Activated naive CD4-positive, alpha-beta T cell treated with anti-CD3 and anti-CD28 coated beads for 36 hours (primary cell): ENCODE measurements at regions of chr1 and their contacts with region 1.

Region 1: DNA sequence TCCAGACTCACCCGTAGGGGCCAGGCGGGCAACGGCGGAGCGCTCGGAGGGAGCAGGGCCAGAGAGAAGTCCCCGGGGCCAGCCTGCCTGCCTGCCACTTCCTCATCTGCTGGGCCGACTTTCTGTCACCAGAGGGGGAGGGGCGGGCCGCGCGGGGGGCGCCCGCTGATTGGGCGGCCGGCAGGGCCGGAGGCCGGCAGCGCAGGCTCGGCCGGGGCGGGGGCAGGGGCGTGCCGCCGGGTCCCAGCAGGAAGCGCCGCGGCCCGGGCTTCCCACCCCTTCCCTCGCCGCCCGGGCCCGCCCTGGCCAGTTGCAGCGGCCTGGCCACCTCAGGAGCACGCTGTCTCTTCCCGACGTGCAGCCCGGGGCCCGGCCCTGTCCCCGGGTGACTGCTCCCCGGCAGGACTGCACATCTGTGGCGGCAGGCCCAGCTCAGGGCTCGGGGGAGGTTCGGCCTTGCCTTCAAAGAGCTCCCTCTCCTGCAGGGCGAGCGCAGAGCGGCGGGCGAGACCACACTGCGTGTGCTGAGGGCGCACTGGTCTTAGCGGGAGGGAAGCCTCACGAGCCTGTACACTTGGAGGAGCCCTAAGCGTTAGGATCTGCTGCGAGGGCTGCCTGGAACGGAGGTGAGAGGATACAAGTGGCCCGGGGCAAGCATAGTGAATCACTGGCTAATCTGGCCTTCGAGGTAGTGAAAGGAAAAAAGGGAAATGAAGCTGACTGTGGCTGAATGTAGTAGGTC is at the start of gene ELOVL1:
- DNase-seq: peak; percentile 91
- H3K4me3 Mint-ChIP-seq: peak within 1 kb of the TSS; percentile 88
- H3K27ac Mint-ChIP-seq: peak within 1 kb of the TSS; percentile 87
- H3K4me1 Mint-ChIP-seq: peaks cover 35% of the 10 kb centered on the region
- H3K27me3 Mint-ChIP-seq: no peaks in the 10 kb centered on the region
- total RNA-seq, gene ELOVL1: 42.8 to 44.2 TPM

Region 2: DNA sequence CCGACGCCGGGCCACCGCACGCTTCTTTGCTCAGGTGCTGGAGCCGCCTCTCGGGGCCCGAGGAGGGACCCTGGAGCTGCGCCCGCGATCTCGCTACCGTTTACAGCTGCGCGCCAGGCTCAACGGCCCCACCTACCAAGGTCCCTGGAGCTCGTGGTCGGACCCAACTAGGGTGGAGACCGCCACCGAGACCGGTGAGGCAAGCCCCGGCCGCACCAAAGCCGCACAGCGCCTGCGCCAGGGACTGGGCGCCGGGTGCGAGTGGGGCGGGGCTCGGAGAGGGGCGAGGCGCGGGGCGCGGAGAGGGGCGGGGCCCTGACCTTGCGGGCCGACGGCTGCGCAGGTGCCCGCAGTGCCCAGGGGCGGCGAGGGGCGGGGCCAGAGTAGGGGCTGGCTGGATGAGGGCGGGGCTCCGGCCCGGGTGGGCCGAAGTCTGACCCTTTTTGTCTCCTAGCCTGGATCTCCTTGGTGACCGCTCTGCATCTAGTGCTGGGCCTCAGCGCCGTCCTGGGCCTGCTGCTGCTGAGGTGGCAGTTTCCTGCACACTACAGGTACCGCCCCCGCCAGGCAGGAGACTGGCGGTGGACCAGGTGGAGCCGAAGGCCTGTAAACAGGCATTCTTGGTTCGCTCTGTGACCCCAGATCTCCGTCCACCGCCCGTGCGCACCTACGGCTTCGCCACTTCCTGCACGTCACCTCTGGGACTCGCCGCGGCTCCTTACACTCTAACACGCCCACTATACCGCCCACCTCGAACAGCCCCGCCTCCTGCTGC is 19.1 kb before region 1 on chr1:
- CTCF ChIA-PET with region 1: no interaction called
- intact Hi-C with region 1: no loop called
- DNase-seq: peak; percentile 79
- H3K4me3 Mint-ChIP-seq: peak overlapping the region; percentile 74
- H3K27ac Mint-ChIP-seq: peak overlapping the region; percentile 77
- H3K4me1 Mint-ChIP-seq: peaks cover 6% of the 10 kb centered on the region
- H3K27me3 Mint-ChIP-seq: no peaks in the 10 kb centered on the region

Region 3: DNA sequence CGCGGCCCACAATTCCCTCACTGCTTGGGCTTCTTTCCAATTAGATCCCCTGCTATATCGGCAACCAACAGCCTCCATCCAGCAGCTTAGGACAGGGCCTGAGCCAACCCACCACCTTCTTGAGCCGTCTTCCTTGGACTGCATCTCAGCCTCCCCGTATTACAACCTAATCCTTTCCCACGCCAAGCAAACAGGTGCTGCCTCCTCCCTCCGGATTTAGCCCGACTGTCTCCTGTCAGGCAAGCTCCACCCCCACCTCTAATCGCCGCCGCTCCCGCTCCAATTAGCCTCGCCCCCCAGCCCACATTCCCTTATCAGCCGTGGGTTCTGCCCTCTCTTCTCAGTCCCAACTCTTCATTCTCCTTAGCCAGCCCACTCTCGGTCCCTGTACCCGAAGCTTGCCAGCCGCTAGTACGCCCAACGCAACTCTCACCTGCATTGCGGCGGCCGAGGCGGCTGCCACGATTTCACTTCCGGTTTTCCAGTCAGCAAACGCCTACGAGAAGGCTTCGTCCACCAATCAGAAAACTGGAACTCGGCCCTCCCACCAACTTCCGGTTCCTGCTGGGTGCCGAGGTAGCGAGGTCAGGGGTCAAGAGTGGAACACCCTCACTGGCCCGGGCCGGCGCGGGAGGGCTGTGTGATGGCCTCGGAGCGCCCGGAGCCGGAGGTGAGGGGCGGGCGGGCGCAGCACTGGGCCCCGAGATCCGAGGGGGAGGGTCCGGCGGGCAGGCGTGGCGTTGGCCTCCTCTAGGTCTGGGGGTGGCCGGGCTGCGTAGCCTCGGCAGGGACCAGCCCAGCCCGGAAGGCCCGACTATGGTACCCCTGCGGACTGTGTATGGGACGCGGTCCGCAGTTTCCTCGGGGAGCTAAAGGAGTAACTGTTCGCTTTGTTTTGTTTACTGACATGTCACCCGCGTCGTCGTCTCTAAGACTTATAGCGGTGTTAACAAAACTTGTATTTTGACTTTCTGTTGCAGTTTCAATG is 21.5 kb after region 1 on chr1 and contains the starts of genes MED8 and SZT2:
- CTCF ChIA-PET with region 1: interaction called, 4 read pairs
- intact Hi-C with region 1: loop called (anchors 1 kb)
- DNase-seq: peak; percentile 96
- H3K4me3 Mint-ChIP-seq: peak within 1 kb of the TSS; percentile 95
- H3K27ac Mint-ChIP-seq: peak within 1 kb of the TSS; percentile 94
- H3K4me1 Mint-ChIP-seq: peaks cover 40% of the 10 kb centered on the region
- H3K27me3 Mint-ChIP-seq: no peaks in the 10 kb centered on the region
- total RNA-seq, gene MED8: 45.8 to 45.9 TPM
- total RNA-seq, gene SZT2: 26.6 to 28.2 TPM

Region 4: DNA sequence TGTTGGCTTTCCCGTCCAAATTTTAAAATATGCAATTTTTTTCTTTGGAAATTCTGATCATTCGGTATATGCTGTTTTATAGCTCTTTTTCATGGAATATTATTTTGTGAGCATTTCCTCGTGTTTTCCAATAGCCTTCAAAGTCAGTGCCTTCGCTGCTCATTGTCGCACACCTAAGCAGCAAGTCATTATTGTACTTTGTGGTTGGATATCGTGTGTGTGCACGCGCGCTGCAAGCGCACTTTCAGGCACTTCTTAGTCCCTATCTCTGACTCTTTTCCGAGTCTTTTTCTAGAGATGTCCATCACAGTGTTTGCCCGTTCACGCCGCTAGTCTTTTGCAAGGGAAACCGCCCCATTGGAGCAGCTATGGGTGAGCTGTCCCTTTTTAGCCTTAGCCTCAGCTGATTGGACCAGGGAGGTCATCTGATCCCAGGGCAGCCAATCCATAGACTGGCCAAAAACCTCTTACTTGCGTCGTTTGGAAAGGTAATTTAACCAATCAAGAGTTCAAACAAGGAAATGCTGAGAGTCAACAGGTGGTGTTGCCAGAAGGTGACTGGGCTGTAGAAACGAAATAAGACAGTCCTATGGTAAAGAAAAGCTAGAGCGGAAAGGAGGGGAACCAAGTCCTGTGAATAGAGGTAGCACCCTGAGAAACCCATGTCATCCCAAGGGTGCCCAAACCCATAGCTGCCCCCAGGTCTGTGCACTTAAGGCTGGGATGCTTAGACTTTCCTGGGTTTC is 86.4 kb after region 1 on chr1:
- CTCF ChIA-PET with region 1: no interaction called
- intact Hi-C with region 1: loop called (anchors 1 kb)
- DNase-seq: peak; percentile 77
- H3K4me3 Mint-ChIP-seq: peak overlapping the region; percentile 83
- H3K27ac Mint-ChIP-seq: peak overlapping the region; percentile 81
- H3K4me1 Mint-ChIP-seq: peaks cover 13% of the 10 kb centered on the region
- H3K27me3 Mint-ChIP-seq: peaks cover 13% of the 10 kb centered on the region

Region 5: DNA sequence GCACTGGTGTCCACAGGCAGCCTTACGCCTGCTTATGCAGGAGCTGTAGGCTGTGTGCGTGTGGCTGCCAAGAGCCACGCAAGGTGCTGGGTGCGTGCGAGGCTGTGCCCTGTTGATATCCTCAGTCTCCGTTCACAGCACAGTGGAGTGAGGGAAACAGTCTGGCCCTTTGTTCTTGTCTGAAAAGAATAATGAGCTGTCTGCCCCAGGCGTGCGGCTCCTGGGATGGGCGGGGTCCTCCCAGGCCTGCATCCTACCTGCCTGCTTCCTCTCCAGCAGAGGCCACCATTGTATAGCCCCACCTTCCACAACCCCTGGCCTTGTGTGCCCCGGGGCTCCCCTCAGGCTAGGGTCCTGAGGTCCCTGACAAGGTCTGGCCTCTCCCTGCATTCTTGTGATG is 234.9 kb after region 1 on chr1:
- CTCF ChIA-PET with region 1: no interaction called
- intact Hi-C with region 1: no loop called
- DNase-seq: no peak
- H3K4me3 Mint-ChIP-seq: no peak overlapping the region
- H3K27ac Mint-ChIP-seq: no peak overlapping the region
- H3K4me1 Mint-ChIP-seq: no peaks in the 10 kb centered on the region
- H3K27me3 Mint-ChIP-seq: no peaks in the 10 kb centered on the region